Right cardiac atrium (tissue), 5 donors: ENCODE measurements at regions of chr4 and their contacts with region 1.

Region 1: GRCh38 chr4:47334652-47335051 is 128.8 kb downstream of the COMMD8 start:
- DNase-seq: no peak
- ATAC-seq: no peak
- H3K4me3 ChIP-seq: no peak overlapping the region
- H3K27ac ChIP-seq: no peak overlapping the region
- H3K4me1 ChIP-seq: no peaks in the 10 kb centered on the region
- H3K27me3 ChIP-seq: no peaks in the 10 kb centered on the region

Region 2: DNA sequence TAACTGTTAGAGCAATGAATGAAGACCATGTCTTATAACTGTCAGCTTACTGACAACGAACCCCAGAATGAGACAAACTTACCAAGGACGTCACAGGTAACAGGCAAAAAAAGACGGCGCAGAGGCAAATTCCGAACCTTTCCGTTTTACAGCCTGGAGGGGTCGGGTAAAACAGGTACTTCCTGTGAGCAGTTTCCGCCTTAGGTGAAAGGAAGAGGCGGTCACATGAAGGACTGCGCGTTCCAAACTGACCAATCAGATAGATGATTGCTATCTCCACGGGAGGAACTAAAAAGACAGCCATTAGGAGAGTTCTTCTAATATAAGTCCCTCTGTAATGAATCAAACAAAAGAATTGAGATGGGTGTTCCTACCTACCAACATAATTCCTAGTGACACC is 425.6 kb before region 1 on chr4 and contains the start of gene COX7B2:
- intact Hi-C with region 1: loop called in 1 of 4 experiments (anchors 5 kb)
- DNase-seq: no peak
- ATAC-seq: no peak
- H3K4me3 ChIP-seq: no peak within 1 kb of the TSS
- H3K27ac ChIP-seq: no peak within 1 kb of the TSS
- H3K4me1 ChIP-seq: no peaks in the 10 kb centered on the region
- H3K27me3 ChIP-seq: no peaks in the 10 kb centered on the region
- total RNA-seq, gene COX7B2: not detected

Region 3: GRCh38 chr4:47562297-47562696 is 227.6 kb after region 1 on chr4:
- intact Hi-C with region 1: no loop called
- DNase-seq: no peak
- ATAC-seq: no peak
- H3K4me3 ChIP-seq: no peak overlapping the region
- H3K27ac ChIP-seq: no peak overlapping the region
- H3K4me1 ChIP-seq: no peaks in the 10 kb centered on the region
- H3K27me3 ChIP-seq: no peaks in the 10 kb centered on the region